Ascending aorta (tissue), 2 donors: ENCODE measurements at regions of chr18 and their contacts with region 1.

Region 1: GRCh38 chr18:70044632-70045031 is 97.0 kb upstream of the CD226 start:
- DNase-seq: no peak
- H3K4me3 ChIP-seq: no peak overlapping the region
- H3K27ac ChIP-seq: no peak overlapping the region
- H3K4me1 ChIP-seq: peaks cover 0 to 9% of the 10 kb centered on the region in 2 donors
- H3K27me3 ChIP-seq: no peaks in the 10 kb centered on the region
- CTCF ChIP-seq: no peak

Region 2: GRCh38 chr18:69898241-69898861 is 146.3 kb before region 1 on chr18:
- intact Hi-C with region 1: no loop called
- DNase-seq: no peak
- H3K4me3 ChIP-seq: no peak overlapping the region
- H3K27ac ChIP-seq: no peak overlapping the region
- H3K4me1 ChIP-seq: no peaks in the 10 kb centered on the region
- H3K27me3 ChIP-seq: no peaks in the 10 kb centered on the region
- CTCF ChIP-seq: no peak

Region 3: DNA sequence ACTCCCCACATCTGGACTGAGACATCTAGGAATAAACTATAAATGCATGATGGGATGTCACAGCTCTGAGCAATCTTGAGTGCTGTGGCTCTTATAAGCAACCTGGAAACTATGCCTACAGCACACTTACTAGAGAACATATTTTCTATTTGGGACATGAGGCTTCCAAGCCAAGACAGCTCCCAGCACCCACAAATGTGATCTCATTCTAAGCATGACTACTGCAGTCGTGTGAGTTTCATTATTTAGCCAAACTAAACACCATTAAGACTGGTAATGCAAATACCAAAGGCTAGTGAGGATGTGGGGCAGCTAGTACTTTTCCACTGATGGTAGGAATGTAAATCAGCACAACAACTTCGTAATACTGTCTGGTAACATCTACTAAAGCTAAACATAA is 88.4 kb after region 1 on chr18:
- intact Hi-C with region 1: loop called (anchors 5 kb)
- DNase-seq: peak in 1 of 2 donors; percentile 74
- H3K4me3 ChIP-seq: no peak overlapping the region
- H3K27ac ChIP-seq: peak overlapping the region; percentile 36 to 60
- H3K4me1 ChIP-seq: peaks cover 0 to 5% of the 10 kb centered on the region in 2 donors
- H3K27me3 ChIP-seq: no peaks in the 10 kb centered on the region
- CTCF ChIP-seq: no peak

Region 4: GRCh38 chr18:70158992-70159717 is 114.5 kb after region 1 on chr18:
- intact Hi-C with region 1: no loop called
- DNase-seq: no peak
- H3K4me3 ChIP-seq: no peak overlapping the region
- H3K27ac ChIP-seq: no peak overlapping the region
- H3K4me1 ChIP-seq: no peaks in the 10 kb centered on the region
- H3K27me3 ChIP-seq: no peaks in the 10 kb centered on the region
- CTCF ChIP-seq: no peak

Region 5: DNA sequence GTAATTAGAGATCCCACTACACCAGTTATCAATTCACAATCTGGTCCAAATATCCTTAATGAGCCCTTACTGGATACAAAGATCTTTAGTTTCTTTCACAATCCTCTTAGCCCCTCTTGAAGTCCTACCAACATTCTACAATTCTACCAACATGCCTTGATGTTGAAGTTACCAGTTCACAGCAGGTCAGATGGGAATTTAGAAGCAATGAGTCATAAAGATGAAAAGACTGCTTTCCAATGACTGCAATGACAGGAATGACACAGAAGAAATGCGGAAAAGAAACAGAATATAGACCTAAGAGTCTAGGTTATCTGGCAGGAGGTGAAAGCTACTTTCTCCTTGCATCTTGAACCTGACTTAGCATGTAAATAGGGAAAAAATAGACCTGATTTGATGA is 136.4 kb after region 1 on chr18:
- intact Hi-C with region 1: loop called (anchors 10 kb)
- DNase-seq: no peak
- H3K4me3 ChIP-seq: peak overlapping the region in 1 of 2 donors; percentile 13
- H3K27ac ChIP-seq: peak overlapping the region in 1 of 2 donors; percentile 47
- H3K4me1 ChIP-seq: peaks cover 0 to 3% of the 10 kb centered on the region in 2 donors
- H3K27me3 ChIP-seq: no peaks in the 10 kb centered on the region
- CTCF ChIP-seq: no peak